Panc1 (cell line): ENCODE measurements at regions of chr5 and their contacts with region 1.

Region 1: DNA sequence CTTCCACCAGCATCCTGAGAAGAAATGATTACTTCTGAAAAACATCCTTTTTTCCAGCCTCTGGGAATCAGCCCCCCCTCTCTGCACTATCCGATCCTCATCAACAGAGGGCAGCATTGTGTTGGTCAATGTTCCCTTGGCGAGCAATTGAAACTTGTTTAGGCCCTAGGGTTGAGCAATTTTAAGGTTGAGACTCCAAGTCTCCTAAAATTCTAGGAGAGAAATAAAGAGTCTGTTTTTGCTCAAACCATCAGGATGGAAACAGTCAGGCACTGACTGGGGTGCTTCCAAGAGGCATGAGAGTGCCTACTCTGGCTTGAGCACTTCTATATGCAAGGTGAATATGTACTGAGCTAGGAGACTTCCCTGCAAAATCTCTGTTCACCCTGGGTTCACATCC is 12.4 kb upstream of the CYFIP2 start:
- DNase-seq: peak; percentile 39
- ATAC-seq: peak; percentile 73; the same call in 1 of the 2 replicates
- H3K4me3 ChIP-seq: no peak overlapping the region
- H3K27ac ChIP-seq: no peak overlapping the region
- H3K4me1 ChIP-seq: no peaks in the 10 kb centered on the region
- H3K27me3 ChIP-seq: no peaks in the 10 kb centered on the region
- CTCF ChIP-seq: peak; percentile 87

Region 2: DNA sequence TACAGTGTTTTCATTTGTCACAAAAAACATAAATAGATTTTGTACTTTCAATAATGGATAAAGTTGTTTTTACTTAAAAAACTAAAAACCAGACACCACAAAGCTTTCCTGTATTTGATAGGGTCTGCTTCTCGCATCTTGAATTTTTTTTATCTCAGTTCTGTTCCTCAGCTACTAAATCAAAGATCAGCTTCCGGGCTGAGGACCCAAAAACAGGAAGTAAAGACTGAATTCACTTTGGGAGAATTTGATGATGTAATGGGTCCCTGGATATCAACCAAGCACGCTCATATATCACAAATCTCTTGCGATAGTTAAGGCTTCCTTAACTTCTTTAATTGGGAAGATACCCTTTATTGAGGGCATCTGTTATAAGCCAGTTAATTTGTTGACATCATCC is 48.8 kb before region 1 on chr5:
- CTCF ChIA-PET with region 1: no interaction called
- POLR2A ChIA-PET with region 1: interaction called, 10 read pairs
- in situ Hi-C with region 1: no loop called
- intact Hi-C with region 1: no loop called
- DNase-seq: no peak
- ATAC-seq: no peak
- H3K4me3 ChIP-seq: no peak overlapping the region
- H3K27ac ChIP-seq: no peak overlapping the region
- H3K4me1 ChIP-seq: no peaks in the 10 kb centered on the region
- H3K27me3 ChIP-seq: no peaks in the 10 kb centered on the region
- CTCF ChIP-seq: no peak

Region 3: DNA sequence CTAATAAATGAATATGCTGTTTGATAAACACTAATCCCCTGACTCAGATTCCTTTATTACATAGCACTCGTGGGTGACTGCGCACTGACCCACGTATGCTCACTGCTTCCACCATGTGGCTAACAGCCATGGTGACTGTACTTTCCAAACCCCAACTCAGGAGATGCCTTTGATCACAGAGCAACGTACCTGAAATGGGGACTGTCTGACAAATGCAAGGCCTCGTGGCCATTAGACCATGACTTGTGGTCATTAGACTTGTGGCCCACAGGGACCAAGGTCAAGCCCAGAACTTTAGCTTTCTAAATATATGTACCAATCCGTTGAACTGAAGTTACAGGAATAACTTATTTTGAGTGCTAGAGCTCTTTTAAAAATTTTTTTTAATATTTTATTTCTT is 58.9 kb after region 1 on chr5:
- CTCF ChIA-PET with region 1: interaction called, 3 read pairs
- POLR2A ChIA-PET with region 1: no interaction called
- in situ Hi-C with region 1: no loop called
- intact Hi-C with region 1: loop called (anchors 2 kb)
- DNase-seq: peak; percentile 36
- ATAC-seq: peak; percentile 80; the same call in 1 of the 2 replicates
- H3K4me3 ChIP-seq: no peak overlapping the region
- H3K27ac ChIP-seq: no peak overlapping the region
- H3K4me1 ChIP-seq: no peaks in the 10 kb centered on the region
- H3K27me3 ChIP-seq: peaks cover 12% of the 10 kb centered on the region; the same call in 1 of the 2 replicates
- CTCF ChIP-seq: peak; percentile 82

Region 4: GRCh38 chr5:157347301-157348048 is 93.9 kb after region 1 on chr5:
- CTCF ChIA-PET with region 1: no interaction called
- POLR2A ChIA-PET with region 1: no interaction called
- in situ Hi-C with region 1: no loop called
- intact Hi-C with region 1: no loop called
- DNase-seq: no peak
- ATAC-seq: no peak
- H3K4me3 ChIP-seq: no peak overlapping the region
- H3K27ac ChIP-seq: no peak overlapping the region
- H3K4me1 ChIP-seq: no peaks in the 10 kb centered on the region
- H3K27me3 ChIP-seq: peaks cover 3% of the 10 kb centered on the region
- CTCF ChIP-seq: no peak